ENCODE measurements at regions of chr12 and their contacts with region 1.

Region 1: DNA sequence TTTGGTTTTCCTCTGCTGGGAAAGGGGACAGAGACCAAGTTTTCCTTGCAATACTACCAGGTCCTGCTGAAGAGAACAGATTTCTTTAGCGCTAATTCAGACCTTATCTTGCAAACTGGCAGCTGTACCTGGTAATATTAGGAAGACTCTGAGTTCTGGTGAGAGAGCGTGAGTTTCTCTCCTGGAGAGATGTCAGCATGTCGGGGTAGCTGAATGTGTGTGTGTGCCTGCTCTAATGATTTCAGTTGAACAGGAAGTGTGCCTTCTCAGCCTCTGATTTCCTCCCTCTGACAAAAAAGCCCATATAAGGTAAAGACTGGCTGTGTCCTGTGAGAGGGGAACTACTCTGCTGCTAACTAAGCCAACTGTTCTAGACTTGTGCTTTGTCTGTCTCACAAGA is 10.3 kb upstream of the ERP27 start:
- DNase-seq: no peak
- ATAC-seq: peak; percentile 91
- H3K4me3 Mint-ChIP-seq: peak overlapping the region; percentile 71
- H3K27ac Mint-ChIP-seq: peak overlapping the region; percentile 96
- H3K4me1 Mint-ChIP-seq: peaks cover 82% of the 10 kb centered on the region
- H3K27me3 Mint-ChIP-seq: no peaks in the 10 kb centered on the region
- CTCF ChIP-seq: no peak

Region 2: DNA sequence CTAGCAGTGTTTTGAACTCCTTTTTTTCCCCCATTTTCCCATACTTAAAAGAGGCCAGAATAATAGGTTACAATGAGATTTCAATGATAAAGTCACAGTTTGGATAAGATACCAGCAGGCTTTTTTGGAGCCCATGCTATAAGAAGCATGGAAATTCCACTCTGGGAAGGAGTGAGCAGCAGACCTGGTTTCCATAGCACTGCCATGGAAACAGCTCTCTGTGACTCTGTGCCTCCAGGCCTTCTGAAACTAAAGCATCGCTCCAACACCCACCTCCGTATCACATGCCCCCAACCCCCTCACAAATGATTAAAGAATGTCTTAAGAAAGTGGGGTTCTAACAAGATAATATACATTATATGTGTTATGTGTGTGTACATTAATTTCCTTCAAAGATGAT is 1132.3 kb before region 1 on chr12:
- CTCF ChIA-PET with region 1: no interaction called
- POLR2A ChIA-PET with region 1: no interaction called
- intact Hi-C with region 1: no loop called
- DNase-seq: no peak
- ATAC-seq: no peak
- H3K4me3 Mint-ChIP-seq: no peak overlapping the region
- H3K27ac Mint-ChIP-seq: no peak overlapping the region
- H3K4me1 Mint-ChIP-seq: no peaks in the 10 kb centered on the region
- H3K27me3 Mint-ChIP-seq: peaks cover 10% of the 10 kb centered on the region
- CTCF ChIP-seq: no peak

Region 3: DNA sequence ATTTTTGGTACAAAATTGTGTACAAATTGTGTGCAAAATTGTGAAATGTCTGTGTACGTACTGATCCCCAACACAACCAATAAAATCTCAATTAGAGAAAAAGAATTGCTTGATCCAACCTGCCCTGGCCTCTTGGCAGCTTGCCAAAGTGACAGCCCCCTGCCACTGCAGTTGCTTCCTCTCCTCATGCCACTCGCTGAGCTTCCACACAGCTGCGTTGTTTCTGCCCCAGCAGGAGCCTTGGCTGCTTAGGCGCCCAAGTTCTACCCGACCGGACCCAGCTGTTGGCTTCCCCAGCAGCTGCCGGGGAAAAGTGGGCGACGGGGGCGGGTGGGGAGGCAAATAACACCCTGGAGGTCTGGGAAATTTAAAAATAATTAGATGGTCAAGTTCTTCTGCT is 755.0 kb before region 1 on chr12:
- CTCF ChIA-PET with region 1: no interaction called
- POLR2A ChIA-PET with region 1: no interaction called
- intact Hi-C with region 1: loop called (anchors 10 kb)
- DNase-seq: no peak
- ATAC-seq: no peak
- H3K4me3 Mint-ChIP-seq: no peak overlapping the region
- H3K27ac Mint-ChIP-seq: no peak overlapping the region
- H3K4me1 Mint-ChIP-seq: peaks cover 33% of the 10 kb centered on the region
- H3K27me3 Mint-ChIP-seq: no peaks in the 10 kb centered on the region
- CTCF ChIP-seq: no peak

Region 4: DNA sequence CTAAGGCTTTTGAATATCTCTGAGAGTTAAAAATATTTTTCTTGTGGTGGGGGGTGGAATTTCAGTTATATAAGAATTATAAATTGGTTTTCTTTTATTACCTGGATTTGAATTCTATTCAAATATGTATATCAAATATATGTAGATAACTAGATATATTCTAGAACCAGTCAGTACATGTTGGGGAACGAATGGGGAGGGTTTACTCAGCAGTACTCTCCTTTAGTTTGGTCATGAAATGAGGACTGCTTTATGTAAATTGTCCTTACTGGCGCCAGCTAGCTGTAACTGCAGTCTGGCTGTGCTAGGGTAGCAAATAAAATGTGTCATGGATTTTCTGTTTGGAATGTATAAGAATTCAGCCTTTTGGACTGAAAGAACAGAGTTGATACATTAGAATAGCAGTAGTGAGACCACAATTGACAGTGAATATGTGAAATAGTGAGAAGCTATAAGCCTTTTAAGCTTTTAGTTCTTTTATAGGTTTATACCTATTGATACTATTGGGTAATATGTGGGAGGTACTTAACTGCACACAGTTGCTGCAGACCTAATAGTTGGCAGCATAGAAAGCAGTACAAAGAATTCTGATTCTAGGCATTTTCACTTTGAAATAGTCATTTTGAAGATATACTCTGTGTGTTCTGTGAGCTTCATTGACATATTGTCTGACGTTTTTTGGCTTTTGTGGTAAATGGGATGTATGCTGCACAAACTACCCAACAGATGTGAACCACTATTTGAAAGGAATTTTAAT is 554.2 kb before region 1 on chr12:
- CTCF ChIA-PET with region 1: no interaction called
- POLR2A ChIA-PET with region 1: no interaction called
- intact Hi-C with region 1: loop called (anchors 10 kb)
- DNase-seq: no peak
- ATAC-seq: peak; percentile 75
- H3K4me3 Mint-ChIP-seq: peak overlapping the region; percentile 77
- H3K27ac Mint-ChIP-seq: peak overlapping the region; percentile 90
- H3K4me1 Mint-ChIP-seq: peaks cover 82% of the 10 kb centered on the region
- H3K27me3 Mint-ChIP-seq: no peaks in the 10 kb centered on the region
- CTCF ChIP-seq: no peak

Region 5: DNA sequence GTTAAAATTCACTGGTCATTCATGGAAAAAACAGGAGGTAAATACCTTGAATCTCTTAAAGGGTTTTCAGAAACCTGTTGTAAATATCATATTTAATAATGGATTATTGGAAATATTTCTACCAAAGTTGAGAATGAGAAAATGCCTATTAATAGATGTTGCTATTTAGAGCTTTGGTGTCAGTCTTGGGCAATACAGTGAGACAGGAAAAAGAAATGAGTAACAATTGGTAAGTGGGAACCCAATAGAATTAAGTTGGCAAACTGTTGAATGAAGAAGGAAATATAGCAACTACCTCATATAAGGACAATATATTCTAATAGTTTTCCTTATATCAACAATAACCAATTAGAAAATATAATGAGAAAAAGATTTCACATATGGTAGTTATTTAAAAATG is 505.1 kb before region 1 on chr12:
- CTCF ChIA-PET with region 1: no interaction called
- POLR2A ChIA-PET with region 1: no interaction called
- intact Hi-C with region 1: no loop called
- DNase-seq: no peak
- ATAC-seq: no peak
- H3K4me3 Mint-ChIP-seq: no peak overlapping the region
- H3K27ac Mint-ChIP-seq: peak overlapping the region; percentile 57
- H3K4me1 Mint-ChIP-seq: peaks cover 18% of the 10 kb centered on the region
- H3K27me3 Mint-ChIP-seq: no peaks in the 10 kb centered on the region
- CTCF ChIP-seq: no peak

Region 6: GRCh38 chr12:14803011-14803829 is 145.5 kb before region 1 on chr12 and contains the starts of genes C12orf60 and WBP11:
- CTCF ChIA-PET with region 1: no interaction called
- POLR2A ChIA-PET with region 1: interaction called, 3 read pairs
- intact Hi-C with region 1: loop called (anchors 2 kb)
- DNase-seq: peak; percentile 74
- ATAC-seq: peak; percentile 95
- H3K4me3 Mint-ChIP-seq: no peak within 1 kb of the TSS
- H3K27ac Mint-ChIP-seq: no peak within 1 kb of the TSS
- H3K4me1 Mint-ChIP-seq: peaks cover 17% of the 10 kb centered on the region
- H3K27me3 Mint-ChIP-seq: no peaks in the 10 kb centered on the region
- CTCF ChIP-seq: no peak
- total RNA-seq, gene C12orf60: 0.64 and 0.69 TPM in 2 replicates
- total RNA-seq, gene WBP11: 86.3 and 89.4 TPM in 2 replicates

Region 7: DNA sequence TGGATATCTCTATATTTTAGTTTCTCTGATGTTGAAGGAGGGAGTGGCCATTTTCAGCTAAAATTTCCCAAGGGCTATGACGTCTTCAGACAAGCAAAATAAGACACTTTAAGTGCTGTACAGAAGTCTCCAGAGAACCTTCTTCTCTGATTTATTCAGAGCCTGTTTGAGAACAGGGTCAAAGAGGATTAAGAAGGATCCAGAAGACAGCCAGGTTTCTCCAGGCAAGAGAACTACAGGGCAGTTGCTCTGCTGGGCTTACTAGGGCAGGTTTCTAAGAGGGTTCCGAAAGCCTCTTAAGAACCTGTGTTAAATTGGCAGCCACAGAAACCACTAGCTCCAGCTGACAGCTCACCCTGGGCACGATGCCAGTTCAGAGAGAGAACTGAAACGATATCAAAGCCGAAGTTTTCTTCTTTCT is 64.2 kb before region 1 on chr12:
- CTCF ChIA-PET with region 1: no interaction called
- POLR2A ChIA-PET with region 1: interaction called, 5 read pairs
- intact Hi-C with region 1: loop called (anchors 2 kb)
- DNase-seq: peak; percentile 57
- ATAC-seq: peak; percentile 96
- H3K4me3 Mint-ChIP-seq: peak overlapping the region; percentile 66
- H3K27ac Mint-ChIP-seq: peak overlapping the region; percentile 76
- H3K4me1 Mint-ChIP-seq: peaks cover 55% of the 10 kb centered on the region
- H3K27me3 Mint-ChIP-seq: peaks cover 25% of the 10 kb centered on the region
- CTCF ChIP-seq: no peak

Region 8: GRCh38 chr12:14937689-14938088 is 11.0 kb before region 1 on chr12:
- CTCF ChIA-PET with region 1: interaction called, 6 read pairs
- POLR2A ChIA-PET with region 1: interaction called, 43 read pairs
- intact Hi-C with region 1: loop called (anchors 1 kb)
- DNase-seq: no peak
- ATAC-seq: peak; percentile 41
- H3K4me3 Mint-ChIP-seq: no peak overlapping the region
- H3K27ac Mint-ChIP-seq: peak overlapping the region; percentile 91
- H3K4me1 Mint-ChIP-seq: peaks cover 37% of the 10 kb centered on the region
- H3K27me3 Mint-ChIP-seq: no peaks in the 10 kb centered on the region
- CTCF ChIP-seq: no peak

Measured in activated B cell treated with CpG ODN at 0.5 μM for 24 hours (primary cell).